CD4-positive, alpha-beta T cell (primary cell): ENCODE measurements at regions of chr9 and their contacts with region 1.

Region 1: GRCh38 chr9:122099271-122099869 is 6.3 kb upstream of the TTLL11 start:
- DNase-seq: peak; percentile 69 to 89 (median 76)
- ATAC-seq: peak; percentile 82
- H3K4me3 ChIP-seq: no peak overlapping the region
- H3K4me3 Mint-ChIP-seq: peak overlapping the region; percentile 68
- H3K27ac ChIP-seq: no peak overlapping the region
- H3K27ac Mint-ChIP-seq: no peak overlapping the region
- H3K4me1 ChIP-seq: peaks cover 12% of the 10 kb centered on the region
- H3K4me1 Mint-ChIP-seq: peaks cover 16% of the 10 kb centered on the region
- H3K27me3 ChIP-seq: no peaks in the 10 kb centered on the region
- H3K27me3 Mint-ChIP-seq: peaks cover 4% of the 10 kb centered on the region
- CTCF ChIP-seq: peak; percentile 85

Region 2: GRCh38 chr9:121658166-121658565 is 441.2 kb before region 1 on chr9:
- CTCF ChIA-PET with region 1: no interaction called
- POLR2A ChIA-PET with region 1: no interaction called
- intact Hi-C with region 1: no loop called
- DNase-seq: no peak
- ATAC-seq: no peak
- H3K4me3 ChIP-seq: no peak overlapping the region
- H3K4me3 Mint-ChIP-seq: no peak overlapping the region
- H3K27ac ChIP-seq: no peak overlapping the region
- H3K27ac Mint-ChIP-seq: no peak overlapping the region
- H3K4me1 ChIP-seq: no peaks in the 10 kb centered on the region
- H3K4me1 Mint-ChIP-seq: no peaks in the 10 kb centered on the region
- H3K27me3 ChIP-seq: peaks cover 14 to 19% of the 10 kb centered on the region in 2 experiments
- H3K27me3 Mint-ChIP-seq: peaks cover 61% of the 10 kb centered on the region
- CTCF ChIP-seq: no peak

Region 3: GRCh38 chr9:122087406-122088200 is 11.8 kb before region 1 on chr9:
- CTCF ChIA-PET with region 1: interaction called, 20 read pairs
- POLR2A ChIA-PET with region 1: no interaction called
- intact Hi-C with region 1: no loop called
- DNase-seq: no peak
- ATAC-seq: no peak
- H3K4me3 ChIP-seq: no peak overlapping the region
- H3K4me3 Mint-ChIP-seq: no peak overlapping the region
- H3K27ac ChIP-seq: no peak overlapping the region
- H3K27ac Mint-ChIP-seq: no peak overlapping the region
- H3K4me1 ChIP-seq: peaks cover 23% of the 10 kb centered on the region
- H3K4me1 Mint-ChIP-seq: peaks cover 34% of the 10 kb centered on the region
- H3K27me3 ChIP-seq: no peaks in the 10 kb centered on the region
- H3K27me3 Mint-ChIP-seq: no peaks in the 10 kb centered on the region
- CTCF ChIP-seq: no peak

Region 4: DNA sequence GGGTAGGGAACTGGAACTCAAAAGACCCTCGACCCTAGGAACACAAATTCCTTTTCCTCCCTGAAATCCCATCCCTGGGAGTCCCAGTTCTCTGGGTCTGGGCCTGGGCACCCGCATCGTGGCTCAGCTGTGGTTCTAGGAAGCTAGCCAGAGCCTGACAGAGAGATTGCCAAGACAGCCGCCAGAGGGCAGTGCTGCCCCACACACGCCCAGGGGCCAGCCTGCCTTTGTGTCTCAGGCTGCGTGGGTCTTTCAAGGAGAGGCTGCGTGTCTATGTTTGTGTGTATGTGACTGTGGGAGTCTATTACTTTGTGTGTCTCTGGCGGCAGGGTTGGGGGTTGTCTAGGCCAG is 25.8 kb after region 1 on chr9:
- CTCF ChIA-PET with region 1: interaction called, 19 read pairs
- POLR2A ChIA-PET with region 1: interaction called, 4 read pairs
- intact Hi-C with region 1: loop called (anchors 1 kb)
- DNase-seq: peak; percentile 55 to 86 (median 74)
- ATAC-seq: peak; percentile 79
- H3K4me3 ChIP-seq: no peak overlapping the region
- H3K4me3 Mint-ChIP-seq: peak overlapping the region; percentile 65
- H3K27ac ChIP-seq: no peak overlapping the region
- H3K27ac Mint-ChIP-seq: no peak overlapping the region
- H3K4me1 ChIP-seq: peaks cover 36% of the 10 kb centered on the region
- H3K4me1 Mint-ChIP-seq: peaks cover 21% of the 10 kb centered on the region
- H3K27me3 ChIP-seq: peaks cover 18 to 27% of the 10 kb centered on the region in 2 experiments
- H3K27me3 Mint-ChIP-seq: peaks cover 52% of the 10 kb centered on the region
- CTCF ChIP-seq: peak; percentile 91

Region 5: GRCh38 chr9:122159026-122159924 is 59.9 kb after region 1 on chr9 and contains the starts of genes MORN5 and NDUFA8:
- CTCF ChIA-PET with region 1: interaction called, 7 read pairs
- POLR2A ChIA-PET with region 1: no interaction called
- intact Hi-C with region 1: loop called (anchors 2 to 5 kb)
- DNase-seq: peak; percentile 93 to 99 (median 96)
- ATAC-seq: peak; percentile 95
- H3K4me3 ChIP-seq: peak within 1 kb of the TSS; percentile 97
- H3K4me3 Mint-ChIP-seq: peak within 1 kb of the TSS; percentile 93
- H3K27ac ChIP-seq: peak within 1 kb of the TSS; percentile 68 to 73
- H3K27ac Mint-ChIP-seq: peak within 1 kb of the TSS; percentile 88
- H3K4me1 ChIP-seq: peaks cover 18% of the 10 kb centered on the region
- H3K4me1 Mint-ChIP-seq: peaks cover 45% of the 10 kb centered on the region
- H3K27me3 ChIP-seq: no peaks in the 10 kb centered on the region
- H3K27me3 Mint-ChIP-seq: peaks cover 17% of the 10 kb centered on the region
- CTCF ChIP-seq: no peak
- total RNA-seq, gene MORN5: not detected
- total RNA-seq, gene NDUFA8: 4.5 to 5.0 TPM

Region 6: DNA sequence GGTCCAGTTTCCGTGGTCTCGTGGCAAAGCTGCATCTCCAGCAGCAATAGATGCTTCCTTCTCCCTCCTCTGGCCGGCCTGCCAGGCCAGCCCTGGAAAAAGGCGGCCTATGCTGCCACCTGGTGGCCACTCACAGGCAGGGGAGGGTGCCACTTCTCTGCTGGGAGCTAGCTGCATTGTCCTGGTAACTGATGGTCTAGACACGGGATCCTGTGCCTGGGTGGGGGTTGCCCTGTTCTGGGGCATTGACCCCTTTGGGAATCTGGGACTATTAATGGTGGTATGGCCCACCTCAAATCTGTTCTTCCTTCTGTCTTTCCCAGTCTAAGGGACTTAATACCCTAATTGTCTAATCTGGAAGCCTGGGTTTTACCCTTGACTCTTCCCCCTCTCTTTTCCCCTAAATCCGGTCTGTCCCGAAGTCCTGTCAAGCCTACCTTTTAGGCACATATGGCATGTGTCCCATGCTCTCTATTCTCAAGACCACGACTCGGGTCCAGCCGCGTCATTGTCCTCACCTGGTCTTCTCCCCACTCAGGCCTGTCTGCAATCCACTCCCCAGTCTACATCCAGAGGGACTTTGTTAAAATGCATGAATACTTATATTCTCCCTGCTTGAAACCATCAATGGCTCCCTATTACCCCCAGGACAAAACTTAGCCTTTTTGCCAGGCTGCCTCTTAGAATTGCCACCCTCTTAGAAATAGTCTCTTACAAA is 251.4 kb after region 1 on chr9:
- CTCF ChIA-PET with region 1: interaction called, 31 read pairs
- POLR2A ChIA-PET with region 1: interaction called, 5 read pairs
- intact Hi-C with region 1: loop called (anchors 1 kb)
- DNase-seq: peak; percentile 48 to 82 (median 70)
- ATAC-seq: peak; percentile 79
- H3K4me3 ChIP-seq: no peak overlapping the region
- H3K4me3 Mint-ChIP-seq: no peak overlapping the region
- H3K27ac ChIP-seq: no peak overlapping the region
- H3K27ac Mint-ChIP-seq: no peak overlapping the region
- H3K4me1 ChIP-seq: peaks cover 6% of the 10 kb centered on the region
- H3K4me1 Mint-ChIP-seq: peaks cover 12% of the 10 kb centered on the region
- H3K27me3 ChIP-seq: peaks cover 15% of the 10 kb centered on the region in 2 experiments
- H3K27me3 Mint-ChIP-seq: peaks cover 54% of the 10 kb centered on the region
- CTCF ChIP-seq: peak; percentile 92

Region 7: GRCh38 chr9:122810306-122810946 is 711.1 kb after region 1 on chr9:
- CTCF ChIA-PET with region 1: interaction called, 3 read pairs
- POLR2A ChIA-PET with region 1: no interaction called
- intact Hi-C with region 1: loop called (anchors 2 kb)
- DNase-seq: peak; percentile 59 to 89 (median 72)
- ATAC-seq: peak; percentile 92
- H3K4me3 ChIP-seq: no peak overlapping the region
- H3K4me3 Mint-ChIP-seq: no peak overlapping the region
- H3K27ac ChIP-seq: no peak overlapping the region
- H3K27ac Mint-ChIP-seq: no peak overlapping the region
- H3K4me1 ChIP-seq: peaks cover 17% of the 10 kb centered on the region
- H3K4me1 Mint-ChIP-seq: peaks cover 30% of the 10 kb centered on the region
- H3K27me3 ChIP-seq: no peaks in the 10 kb centered on the region
- H3K27me3 Mint-ChIP-seq: no peaks in the 10 kb centered on the region
- CTCF ChIP-seq: peak; percentile 85